ENCODE measurements at regions of chr17 and their contacts with region 1.

Region 1: GRCh38 chr17:44947461-44948314 is at the start of gene KIF18B:
- DNase-seq: peak; percentile 77
- ATAC-seq: peak; percentile 99
- H3K4me3 Mint-ChIP-seq: peak within 1 kb of the TSS; percentile 91
- H3K27ac Mint-ChIP-seq: peak within 1 kb of the TSS; percentile 86
- H3K4me1 Mint-ChIP-seq: peaks cover 14% of the 10 kb centered on the region
- H3K27me3 Mint-ChIP-seq: peaks cover 4% of the 10 kb centered on the region
- CTCF ChIP-seq: no peak
- total RNA-seq, gene KIF18B: 0.49 and 1.7 TPM in 2 replicates

Region 2: GRCh38 chr17:44899069-44899782 is 48.5 kb before region 1 on chr17 and contains the start of gene EFTUD2:
- CTCF ChIA-PET with region 1: no interaction called
- POLR2A ChIA-PET with region 1: no interaction called
- intact Hi-C with region 1: loop called (anchors 1 kb)
- DNase-seq: peak; percentile 94
- ATAC-seq: peak; percentile 93
- H3K4me3 Mint-ChIP-seq: peak within 1 kb of the TSS; percentile 96
- H3K27ac Mint-ChIP-seq: peak within 1 kb of the TSS; percentile 99
- H3K4me1 Mint-ChIP-seq: peaks cover 31% of the 10 kb centered on the region
- H3K27me3 Mint-ChIP-seq: peaks cover 4% of the 10 kb centered on the region
- CTCF ChIP-seq: no peak
- total RNA-seq, gene EFTUD2: 168 and 192 TPM in 2 replicates

Region 3: DNA sequence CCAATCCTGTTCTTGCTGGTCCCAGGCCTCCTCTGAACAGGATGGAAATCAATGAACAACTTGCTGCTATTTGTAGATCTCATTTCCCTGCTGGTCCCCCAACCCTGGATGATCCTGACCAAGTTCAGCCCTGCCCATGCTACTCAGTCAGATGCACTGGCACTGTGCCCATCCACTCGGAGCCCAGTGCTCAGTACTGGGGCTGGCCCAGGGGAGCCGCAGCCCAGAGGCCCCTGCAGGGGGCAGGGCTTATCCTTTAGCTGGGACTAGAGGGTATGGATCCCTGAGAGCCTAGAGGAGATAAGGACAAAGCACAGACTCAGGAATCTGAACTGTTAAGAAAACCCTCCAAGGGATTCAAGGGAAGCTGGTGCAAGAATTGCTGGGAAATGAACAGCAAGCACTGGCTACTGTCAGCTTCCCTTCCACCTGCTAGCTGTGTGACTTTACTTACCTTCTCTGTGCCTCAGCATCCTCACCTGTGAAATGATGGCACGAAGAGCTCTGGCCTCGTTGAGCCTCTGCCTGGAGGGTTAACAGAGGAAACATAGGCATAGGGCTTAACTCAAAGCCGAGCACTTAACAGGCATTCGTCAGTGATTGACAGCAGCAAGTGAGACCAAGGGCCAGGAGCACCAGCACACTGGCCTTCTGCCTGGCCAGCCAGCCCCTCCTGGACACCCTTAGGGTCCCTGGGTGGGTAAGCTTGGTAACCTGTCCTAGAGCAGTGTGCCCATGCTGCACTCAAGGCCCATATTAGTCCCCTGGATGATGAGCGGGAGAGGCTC is 50.2 kb after region 1 on chr17:
- CTCF ChIA-PET with region 1: no interaction called
- POLR2A ChIA-PET with region 1: no interaction called
- intact Hi-C with region 1: no loop called
- DNase-seq: no peak
- ATAC-seq: no peak
- H3K4me3 Mint-ChIP-seq: no peak overlapping the region
- H3K27ac Mint-ChIP-seq: no peak overlapping the region
- H3K4me1 Mint-ChIP-seq: no peaks in the 10 kb centered on the region
- H3K27me3 Mint-ChIP-seq: peaks cover 34% of the 10 kb centered on the region
- CTCF ChIP-seq: no peak

Measured in activated B cell treated with CpG ODN at 0.5 μM for 24 hours (primary cell).